Dendritic cell treated with granulocyte-macrophage colony-stimulating factor and Interleukin-4, amounts not matched to agents 40 ng/mL and 50 ng/mL, for 4 days (primary cell): ENCODE measurements at regions of chr6 and their contacts with region 1.

Region 1: DNA sequence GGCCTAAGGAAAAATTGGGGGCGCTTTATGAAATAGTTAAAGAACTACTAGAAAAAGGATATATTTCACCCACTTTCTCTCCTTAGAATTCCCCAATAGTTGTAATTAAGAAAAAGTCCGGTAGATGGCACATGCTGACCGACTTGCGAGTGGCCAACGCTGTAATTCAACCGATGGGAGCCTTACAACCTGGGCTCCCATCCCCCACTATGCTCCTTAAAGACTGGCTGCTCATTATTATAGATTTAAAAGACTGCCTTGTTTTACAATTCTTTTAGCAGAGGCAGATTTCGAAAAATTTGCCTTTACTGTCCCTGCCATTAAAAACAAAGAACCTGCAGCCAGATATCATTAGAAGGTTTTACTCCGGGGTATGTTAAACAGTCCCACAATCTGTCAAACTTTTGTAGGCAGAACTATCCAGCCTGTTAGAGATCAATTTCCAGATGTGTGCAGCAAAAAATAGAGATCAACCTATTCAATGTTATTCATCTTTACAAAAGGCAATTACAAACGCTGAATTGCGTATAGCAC is 58.5 kb upstream of the PRSS16 start:
- H3K4me3 Mint-ChIP-seq: peak overlapping the region; percentile 76
- H3K27ac Mint-ChIP-seq: peak overlapping the region; percentile 27
- H3K4me1 Mint-ChIP-seq: peaks cover 11% of the 10 kb centered on the region
- H3K27me3 Mint-ChIP-seq: peaks cover 16% of the 10 kb centered on the region

Region 2: GRCh38 chr6:27146706-27147505 is 42.0 kb before region 1 on chr6:
- intact Hi-C with region 1: no loop called
- H3K4me3 Mint-ChIP-seq: no peak overlapping the region
- H3K27ac Mint-ChIP-seq: no peak overlapping the region
- H3K4me1 Mint-ChIP-seq: peaks cover 5% of the 10 kb centered on the region
- H3K27me3 Mint-ChIP-seq: no peaks in the 10 kb centered on the region

Region 3: DNA sequence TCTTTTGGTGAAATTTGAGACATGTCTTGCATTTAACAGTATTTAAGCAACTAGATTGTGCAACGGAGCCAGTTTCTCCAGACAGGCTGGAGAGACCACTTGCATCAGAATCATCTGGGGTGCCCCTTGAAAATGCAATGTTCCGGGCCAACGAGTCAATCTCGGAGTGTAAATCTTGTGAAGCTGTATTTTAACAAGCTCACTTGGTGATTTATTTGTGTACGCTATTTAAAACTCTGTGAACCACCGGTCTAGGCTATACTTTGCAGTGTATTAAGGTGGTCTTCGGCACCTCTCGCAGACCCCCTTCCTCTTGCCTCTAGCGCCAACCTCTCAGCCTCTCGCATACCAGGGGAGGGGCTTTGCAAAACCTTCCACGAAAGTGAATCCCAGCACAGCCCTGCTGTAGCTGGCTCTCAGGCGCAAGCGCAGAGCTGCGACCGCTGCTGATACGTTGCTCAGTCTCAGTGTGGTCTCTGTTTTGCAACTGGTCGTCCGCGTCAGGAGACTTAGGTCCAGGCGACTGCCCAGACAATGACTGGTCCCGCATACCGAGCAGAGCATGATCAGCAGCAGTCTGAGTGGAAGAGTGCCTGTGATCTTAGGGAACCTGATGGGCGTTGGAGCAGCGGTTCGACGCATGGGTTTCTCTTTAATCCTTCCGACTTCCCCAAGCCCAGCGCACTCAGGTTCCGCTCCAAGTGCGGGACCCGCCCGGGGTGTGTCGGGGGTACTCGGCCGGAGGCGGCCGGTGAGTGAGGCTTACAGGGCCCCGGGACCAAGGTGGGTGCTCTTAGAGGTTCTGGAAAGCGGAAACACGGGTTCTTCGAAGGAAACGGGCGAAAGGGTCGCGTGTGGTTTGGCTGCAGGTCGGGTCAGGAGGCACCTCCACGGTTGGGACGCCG is 199.6 kb after region 1 on chr6 and contains the start of gene ZNF391:
- intact Hi-C with region 1: no loop called
- H3K4me3 Mint-ChIP-seq: peak within 1 kb of the TSS; percentile 98
- H3K27ac Mint-ChIP-seq: peak within 1 kb of the TSS; percentile 86
- H3K4me1 Mint-ChIP-seq: peaks cover 13% of the 10 kb centered on the region
- H3K27me3 Mint-ChIP-seq: peaks cover 15% of the 10 kb centered on the region

Region 4: GRCh38 chr6:27528714-27529113 is 339.8 kb after region 1 on chr6:
- intact Hi-C with region 1: no loop called
- H3K4me3 Mint-ChIP-seq: no peak overlapping the region
- H3K27ac Mint-ChIP-seq: no peak overlapping the region
- H3K4me1 Mint-ChIP-seq: no peaks in the 10 kb centered on the region
- H3K27me3 Mint-ChIP-seq: peaks cover 31% of the 10 kb centered on the region

Region 5: DNA sequence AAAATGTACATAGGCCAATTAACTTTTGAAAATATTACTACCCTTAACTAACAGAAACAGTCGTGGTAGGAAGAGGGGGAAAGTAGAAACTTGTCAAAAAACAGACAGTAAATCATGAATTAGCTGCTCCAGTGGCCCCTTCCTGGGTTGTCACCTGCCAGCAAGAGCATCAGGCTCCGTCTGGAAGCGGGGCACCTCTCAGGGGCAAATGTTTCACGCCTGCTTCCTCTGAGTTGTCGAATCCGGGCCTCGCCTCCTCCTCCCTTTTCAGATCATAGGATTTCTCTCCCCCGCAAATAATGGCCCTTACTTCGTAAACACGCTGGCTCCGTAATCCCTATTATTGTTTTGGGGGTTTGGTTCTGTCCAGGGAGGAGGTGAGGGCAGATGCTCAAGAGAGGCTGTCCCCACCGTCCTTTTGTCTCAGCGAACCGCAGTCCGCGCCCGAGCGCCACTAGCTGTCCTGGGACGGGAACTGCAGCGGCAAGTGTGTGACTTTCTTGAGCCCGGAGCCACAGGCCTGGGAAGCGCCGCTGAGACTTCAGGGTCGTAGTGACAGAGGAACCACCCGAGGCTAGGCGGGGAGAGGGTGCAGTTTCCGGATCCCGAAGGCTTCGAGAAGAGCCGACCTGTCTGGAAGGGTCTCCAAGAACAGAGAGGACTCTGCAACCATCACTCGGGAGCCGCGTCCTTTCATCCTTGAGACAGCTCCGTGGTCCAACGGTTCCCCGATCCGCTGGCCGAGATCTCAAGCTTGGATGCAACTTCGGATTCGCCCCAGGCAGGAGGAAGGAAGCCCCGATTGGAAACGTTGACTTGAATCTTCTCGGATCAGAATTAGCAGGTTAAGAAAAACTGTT is 498.4 kb after region 1 on chr6:
- intact Hi-C with region 1: loop called (anchors 10 kb)
- H3K4me3 Mint-ChIP-seq: peak overlapping the region; percentile 78
- H3K27ac Mint-ChIP-seq: no peak overlapping the region
- H3K4me1 Mint-ChIP-seq: peaks cover 11% of the 10 kb centered on the region
- H3K27me3 Mint-ChIP-seq: peaks cover 65% of the 10 kb centered on the region

Region 6: DNA sequence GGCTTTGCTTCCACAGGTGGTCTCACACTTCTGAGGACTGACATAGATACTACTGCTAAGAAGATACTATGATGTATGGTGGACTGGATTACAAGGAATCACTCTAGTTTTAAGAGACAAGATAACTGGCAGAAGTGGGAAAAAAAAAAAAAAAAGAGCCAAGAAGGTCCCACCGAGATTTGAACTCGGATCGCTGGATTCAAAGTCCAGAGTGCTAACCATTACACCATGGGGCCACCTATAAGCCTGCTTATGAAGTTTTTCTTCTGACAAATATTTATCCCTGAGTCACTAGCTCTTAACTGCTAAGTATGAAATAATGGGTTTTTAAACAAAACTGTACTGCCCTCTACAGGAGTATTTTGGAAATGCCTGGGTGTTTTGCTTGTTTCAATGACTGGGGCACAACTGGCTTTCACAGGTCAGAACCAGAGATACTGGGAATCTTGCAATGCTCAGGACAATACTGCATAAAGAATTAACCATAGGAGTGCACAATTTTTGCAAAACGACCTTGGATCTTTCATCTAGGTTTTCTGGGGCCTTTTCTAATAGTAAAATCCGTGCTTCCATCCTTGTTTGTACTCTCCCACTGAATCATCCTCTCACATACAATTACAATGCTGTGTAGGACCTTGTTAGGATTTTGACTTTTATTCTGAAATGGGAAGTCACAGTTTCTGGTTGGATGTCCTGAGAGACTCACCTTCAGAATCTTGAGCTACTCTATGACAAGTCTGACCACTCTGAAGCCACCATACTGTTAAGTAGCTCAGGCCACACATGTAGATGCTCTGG is 606.9 kb after region 1 on chr6:
- intact Hi-C with region 1: loop called (anchors 1 kb)
- H3K4me3 Mint-ChIP-seq: no peak overlapping the region
- H3K27ac Mint-ChIP-seq: no peak overlapping the region
- H3K4me1 Mint-ChIP-seq: peaks cover 15% of the 10 kb centered on the region
- H3K27me3 Mint-ChIP-seq: peaks cover 14% of the 10 kb centered on the region